ENCODE measurements at regions of chr3 and their contacts with region 1.

Region 1: DNA sequence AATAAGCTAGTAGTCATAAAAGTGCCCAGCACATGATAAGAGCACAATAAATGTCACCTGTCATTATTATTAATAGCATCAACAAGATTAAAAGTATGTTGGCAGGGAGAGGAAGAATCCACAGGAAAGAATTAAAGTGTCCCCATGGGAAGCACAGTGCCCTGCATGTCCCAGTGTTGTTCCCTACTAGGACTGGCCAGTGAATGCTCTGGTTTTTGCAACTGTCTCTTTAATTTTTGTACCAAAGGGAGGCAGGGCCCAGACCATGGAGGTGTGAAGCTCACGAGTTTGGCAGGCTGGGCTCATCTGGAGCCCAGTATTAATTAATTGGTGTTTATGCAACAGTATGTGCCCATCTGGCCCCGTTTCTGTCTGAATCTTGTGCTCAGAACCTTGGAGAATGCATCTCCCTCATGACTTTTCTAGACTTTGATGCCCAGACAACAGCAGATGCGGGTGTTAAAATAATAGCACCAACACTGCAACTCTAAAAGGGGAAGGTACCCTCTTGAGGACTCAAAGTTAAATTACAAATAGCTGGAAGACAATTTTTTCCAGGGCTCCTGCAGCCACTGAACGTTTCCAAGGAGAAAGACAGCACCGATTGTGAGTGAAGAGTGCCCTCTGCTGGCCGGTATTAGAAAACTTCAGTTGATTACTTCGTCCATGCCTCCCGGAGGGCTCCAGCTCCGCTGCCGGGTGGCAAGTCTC is 71.9 kb upstream of the SPATA12 start:
- DNase-seq: peak; percentile 82
- ATAC-seq: peak; percentile 85 to 87

Region 2: GRCh38 chr3:56702490-56703315 is 285.9 kb before region 1 on chr3:
- intact Hi-C with region 1: loop called (anchors 1 to 2 kb)
- DNase-seq: no peak
- ATAC-seq: peak; percentile 27 to 57

Region 3: GRCh38 chr3:56855856-56856512 is 132.6 kb before region 1 on chr3:
- intact Hi-C with region 1: loop called in 1 of 2 experiments (anchors 5 kb)
- DNase-seq: peak; percentile 43
- ATAC-seq: peak; percentile 25 to 50

Region 4: DNA sequence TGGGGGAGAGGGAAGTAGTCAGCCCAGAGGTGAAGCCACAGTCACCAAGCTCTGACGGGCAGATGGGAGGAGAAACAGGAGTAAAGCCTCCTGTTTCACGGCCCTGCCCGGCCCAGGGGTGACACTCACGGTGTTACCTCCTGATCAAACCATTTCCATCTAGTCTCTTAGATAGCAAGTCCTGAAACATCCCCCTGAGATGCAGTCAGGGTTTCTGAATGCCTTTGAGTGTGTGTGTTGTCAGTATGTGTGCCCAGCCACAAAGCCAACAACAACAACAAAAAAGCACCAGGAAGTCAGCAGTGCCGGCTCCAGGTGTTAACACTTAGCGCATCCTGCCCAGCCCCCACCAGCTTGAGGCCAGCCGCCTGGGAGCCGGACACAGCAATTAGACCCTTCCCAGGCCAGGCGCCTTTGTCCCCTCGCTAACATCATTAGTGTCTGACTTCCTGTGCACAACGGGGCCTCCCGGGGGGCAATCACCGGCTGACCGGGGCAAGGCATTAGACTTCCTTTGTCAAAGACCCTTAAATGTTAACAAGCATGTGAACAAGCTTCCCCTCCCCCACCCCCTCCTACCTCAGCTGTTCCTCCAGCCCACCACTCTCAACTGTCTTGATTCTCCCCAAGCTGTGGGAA is 142.1 kb after region 1 on chr3:
- intact Hi-C with region 1: no loop called
- DNase-seq: no peak
- ATAC-seq: no peak